ENCODE measurements at regions of chr1 and their contacts with region 1.

Region 1: DNA sequence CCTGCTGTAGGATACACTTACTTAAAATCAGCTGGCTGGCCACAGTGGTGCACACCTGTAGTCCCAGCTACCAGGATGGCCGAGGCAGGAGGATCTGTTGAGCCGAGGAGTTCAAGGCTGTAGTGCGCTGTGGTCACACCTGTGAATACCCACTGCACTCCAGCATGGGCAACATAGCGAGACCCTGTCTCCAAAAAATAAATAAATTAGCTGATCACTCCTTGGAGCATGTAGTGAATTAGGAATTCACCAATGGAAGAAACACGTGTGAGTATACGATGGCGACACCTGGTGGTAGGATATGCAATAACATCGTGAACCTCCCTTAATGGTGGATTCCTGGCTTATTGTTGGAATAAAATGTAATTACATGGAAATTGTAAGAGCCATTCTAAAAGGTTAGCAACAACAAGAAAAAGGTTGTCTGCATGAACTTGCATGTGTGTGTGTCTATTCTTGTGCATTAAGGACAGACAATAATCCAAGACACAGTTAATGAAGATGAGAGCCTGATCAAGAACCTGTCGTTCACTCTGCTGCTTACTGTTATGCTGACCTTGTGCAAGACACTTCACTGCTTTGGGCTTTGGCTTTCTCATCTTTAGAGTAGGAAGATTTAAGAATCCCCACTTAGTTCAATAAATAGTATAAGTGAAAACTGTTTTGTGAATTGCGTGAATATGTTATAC is 38.6 kb upstream of the COX20 start:
- DNase-seq: peak in 6 of 10 donors; percentile 45 to 81 (median 68)
- H3K4me3 ChIP-seq: no peak overlapping the region
- H3K27ac ChIP-seq: no peak overlapping the region
- H3K27me3 ChIP-seq: no peaks in the 10 kb centered on the region
- CTCF ChIP-seq: peak; percentile 84 to 98 (median 93)

Region 2: GRCh38 chr1:244451951-244452795 is 344.7 kb before region 1 on chr1:
- intact Hi-C with region 1: loop called in 1 of 2 experiments (anchors 5 kb)
- DNase-seq: peak; percentile 94 to 99 (median 98)
- H3K4me3 ChIP-seq: peak overlapping the region; percentile 70 to 99 (median 95)
- H3K27ac ChIP-seq: peak overlapping the region; percentile 80 to 98 (median 94)
- H3K27me3 ChIP-seq: no peaks in the 10 kb centered on the region
- CTCF ChIP-seq: peak; percentile 24 to 77 (median 65)

Region 3: GRCh38 chr1:244513493-244513892 is 283.4 kb before region 1 on chr1:
- intact Hi-C with region 1: no loop called
- DNase-seq: no peak
- H3K4me3 ChIP-seq: no peak overlapping the region
- H3K27ac ChIP-seq: no peak overlapping the region
- H3K27me3 ChIP-seq: no peaks in the 10 kb centered on the region
- CTCF ChIP-seq: no peak

Region 4: GRCh38 chr1:244599937-244600350 is 196.9 kb before region 1 on chr1:
- intact Hi-C with region 1: loop called (anchors 1 to 2 kb)
- DNase-seq: no peak
- H3K4me3 ChIP-seq: no peak overlapping the region
- H3K27ac ChIP-seq: no peak overlapping the region
- H3K27me3 ChIP-seq: no peaks in the 10 kb centered on the region
- CTCF ChIP-seq: no peak

Region 5: DNA sequence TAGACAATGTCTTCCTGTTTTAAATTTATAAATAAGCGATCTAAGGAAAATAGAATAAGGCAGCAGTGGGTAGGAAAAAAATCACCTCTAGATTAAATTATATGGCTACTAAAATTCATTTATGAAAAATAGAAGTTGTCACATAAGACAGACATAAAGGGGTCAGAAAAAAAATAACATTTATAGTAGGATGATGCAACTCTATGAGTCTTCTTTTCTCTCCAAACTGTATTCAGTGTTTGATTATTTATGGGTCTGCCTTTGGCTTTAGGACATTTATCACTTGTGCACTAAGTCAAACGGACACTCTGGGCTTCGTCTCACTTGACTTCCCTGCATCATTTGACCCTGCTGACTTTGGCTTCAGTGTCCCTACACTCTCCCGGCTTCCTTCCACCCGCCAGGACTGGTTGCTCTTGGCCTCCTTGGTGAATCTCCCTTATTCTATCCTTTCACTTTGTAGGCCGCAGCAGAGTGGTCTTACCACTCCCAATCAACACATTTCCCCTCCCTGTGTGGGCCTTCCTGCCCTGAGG is 191.0 kb before region 1 on chr1:
- intact Hi-C with region 1: loop called (anchors 1 to 2 kb)
- DNase-seq: no peak
- H3K4me3 ChIP-seq: no peak overlapping the region
- H3K27ac ChIP-seq: no peak overlapping the region
- H3K27me3 ChIP-seq: no peaks in the 10 kb centered on the region
- CTCF ChIP-seq: no peak

Region 6: GRCh38 chr1:244835276-244836134 is 38.6 kb after region 1 on chr1 and contains the start of gene COX20:
- intact Hi-C with region 1: loop called in 1 of 2 experiments (anchors 5 kb)
- DNase-seq: peak; percentile 70 to 88 (median 82)
- H3K4me3 ChIP-seq: peak within 1 kb of the TSS; percentile 50 to 90 (median 78)
- H3K27ac ChIP-seq: peak within 1 kb of the TSS; percentile 96 to 100 (median 100)
- H3K27me3 ChIP-seq: no peaks in the 10 kb centered on the region
- CTCF ChIP-seq: peak in 18 of 56 donors; percentile 4 to 38 (median 15)
- total RNA-seq, gene COX20: 23.7 to 50.5 (median 37.6) TPM

Region 7: GRCh38 chr1:245045087-245045881 is 248.4 kb after region 1 on chr1:
- intact Hi-C with region 1: loop called (anchors 2 to 10 kb)
- DNase-seq: peak in 1 of 10 donors; percentile 42
- H3K4me3 ChIP-seq: peak overlapping the region in 50 of 59 donors; percentile 1 to 54 (median 30)
- H3K27ac ChIP-seq: peak overlapping the region in 32 of 59 donors; percentile 9 to 88 (median 53)
- H3K27me3 ChIP-seq: no peaks in the 10 kb centered on the region
- CTCF ChIP-seq: no peak